Mammary epithelial cell (primary cell): ENCODE measurements at regions of chr19 and their contacts with region 1.

Region 1: GRCh38 chr19:48333467-48334384 is 8.4 kb downstream of the EMP3 start:
- DNase-seq: peak; percentile 87
- H3K4me3 ChIP-seq: peak overlapping the region; percentile 15 to 48 (median 44)
- H3K27ac ChIP-seq: peak overlapping the region; percentile 45
- H3K4me1 ChIP-seq: peaks cover 35% of the 10 kb centered on the region
- H3K27me3 ChIP-seq: no peaks in the 10 kb centered on the region
- CTCF ChIP-seq: peak; percentile 54 to 89

Region 2: DNA sequence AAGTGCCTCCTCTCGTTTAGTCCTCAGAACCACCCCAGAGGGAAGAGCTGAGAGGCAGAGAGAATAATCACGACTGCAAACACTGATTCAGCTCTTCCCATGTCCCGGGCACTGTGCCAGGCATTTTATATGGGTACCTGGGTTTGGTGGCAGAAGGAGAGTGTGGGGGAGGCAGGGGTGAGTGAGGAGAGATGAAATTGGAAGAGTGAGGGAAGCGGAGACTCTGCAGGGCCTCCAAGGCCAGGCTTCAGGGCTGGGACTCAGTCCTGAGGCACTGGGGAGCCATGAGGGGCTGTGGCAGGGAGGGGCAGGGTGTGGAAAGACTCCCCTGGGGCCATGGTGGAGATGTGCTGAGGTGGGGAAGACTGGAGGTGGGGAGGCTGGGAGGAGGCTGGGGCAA is 39.2 kb after region 1 on chr19:
- CTCF ChIA-PET with region 1: no interaction called
- dilution Hi-C with region 1: loop called (anchors 5 kb)
- in situ Hi-C with region 1: no loop called
- intact Hi-C with region 1: no loop called
- DNase-seq: peak; percentile 46
- H3K4me3 ChIP-seq: no peak overlapping the region
- H3K27ac ChIP-seq: no peak overlapping the region
- H3K4me1 ChIP-seq: peaks cover 5% of the 10 kb centered on the region
- H3K27me3 ChIP-seq: no peaks in the 10 kb centered on the region
- CTCF ChIP-seq: no peak

Region 3: DNA sequence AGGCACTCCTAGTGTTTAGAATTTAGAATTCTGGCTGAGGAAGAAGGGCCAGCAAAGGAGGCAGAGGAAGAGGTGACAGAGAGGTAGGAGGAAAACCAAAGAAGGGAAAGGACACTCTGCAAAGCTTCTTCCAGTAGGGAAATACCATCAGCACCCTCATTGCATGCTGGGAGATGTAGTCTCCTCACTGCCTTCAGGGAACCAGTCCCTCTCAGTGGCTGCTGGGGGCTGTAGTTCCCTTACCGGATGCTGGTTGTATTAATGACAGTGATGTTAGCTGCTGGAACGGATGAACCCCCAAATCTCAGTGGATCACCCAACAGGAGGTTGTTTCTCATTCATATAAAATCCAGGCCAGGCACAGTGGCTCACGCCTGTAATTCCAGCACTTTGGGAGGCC is 69.9 kb after region 1 on chr19:
- CTCF ChIA-PET with region 1: no interaction called
- dilution Hi-C with region 1: loop called (anchors 5 kb)
- in situ Hi-C with region 1: no loop called
- intact Hi-C with region 1: no loop called
- DNase-seq: peak; percentile 54
- H3K4me3 ChIP-seq: no peak overlapping the region
- H3K27ac ChIP-seq: no peak overlapping the region
- H3K4me1 ChIP-seq: no peaks in the 10 kb centered on the region
- H3K27me3 ChIP-seq: no peaks in the 10 kb centered on the region
- CTCF ChIP-seq: no peak